ENCODE measurements at regions of chr7 and their contacts with region 1.

Region 1: GRCh38 chr7:143240291-143241168 is 18.7 kb downstream of the TAS2R40 start:
- DNase-seq: peak; percentile 47 to 76
- ATAC-seq: peak; percentile 84 to 96
- H3K4me3 ChIP-seq: no peak overlapping the region
- H3K27ac ChIP-seq: no peak overlapping the region
- H3K4me1 ChIP-seq: peaks cover 9% of the 10 kb centered on the region
- CTCF ChIP-seq: peak; percentile 95
- EP300 ChIP-seq: no peak
- POLR2A ChIP-seq: no peak
- RAD21 ChIP-seq: peak; percentile 89 to 92

Region 2: DNA sequence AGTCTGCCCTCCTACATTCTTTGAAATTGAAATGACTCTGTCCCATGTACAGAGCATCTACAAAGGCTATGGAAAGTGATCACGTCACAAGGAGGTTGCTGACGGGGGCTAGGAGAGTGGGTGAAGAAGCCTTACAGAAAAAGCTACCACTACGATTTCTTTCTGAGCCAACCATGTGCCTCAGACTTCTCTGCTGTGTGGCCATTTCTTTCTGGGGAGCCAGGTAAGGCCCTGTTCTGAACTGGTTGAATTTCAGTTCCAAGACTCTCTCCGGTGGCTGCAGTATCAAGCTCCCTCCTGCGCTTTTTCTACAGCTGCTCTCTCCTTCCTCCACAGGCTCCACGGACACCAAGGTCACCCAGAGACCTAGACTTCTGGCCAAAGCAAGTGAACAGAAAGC is 603.8 kb before region 1 on chr7:
- CTCF ChIA-PET with region 1: no interaction called
- POLR2A ChIA-PET with region 1: no interaction called
- DNase-seq: no peak
- ATAC-seq: no peak; a peak in 1 of 6 replicates
- H3K4me3 ChIP-seq: no peak overlapping the region
- H3K27ac ChIP-seq: no peak overlapping the region
- H3K4me1 ChIP-seq: no peaks in the 10 kb centered on the region
- CTCF ChIP-seq: no peak
- EP300 ChIP-seq: no peak
- POLR2A ChIP-seq: no peak
- RAD21 ChIP-seq: no peak

Region 3: DNA sequence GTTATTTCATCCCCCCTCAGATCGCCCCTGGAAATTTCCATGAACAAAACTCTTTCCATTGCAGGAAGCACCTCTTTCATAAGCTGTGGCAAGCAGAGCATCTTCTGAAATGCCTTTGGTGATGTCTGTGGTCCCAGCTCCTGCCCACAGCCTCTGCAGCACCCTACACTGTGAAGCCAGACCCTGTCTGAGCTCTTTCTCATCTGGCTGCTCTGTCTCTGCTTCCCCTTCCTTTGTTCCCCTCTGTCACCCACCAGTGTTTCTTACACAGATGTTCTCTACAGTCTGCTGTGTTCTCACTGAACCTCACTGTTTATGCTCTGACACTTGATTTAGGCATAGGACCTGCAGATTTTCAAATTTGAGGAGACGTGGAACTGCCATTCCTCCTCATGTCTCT is 59.2 kb before region 1 on chr7:
- CTCF ChIA-PET with region 1: no interaction called
- POLR2A ChIA-PET with region 1: no interaction called
- DNase-seq: no peak
- ATAC-seq: no peak
- H3K4me3 ChIP-seq: no peak overlapping the region
- H3K27ac ChIP-seq: no peak overlapping the region
- H3K4me1 ChIP-seq: no peaks in the 10 kb centered on the region
- CTCF ChIP-seq: no peak
- EP300 ChIP-seq: no peak
- POLR2A ChIP-seq: no peak
- RAD21 ChIP-seq: no peak

Region 4: GRCh38 chr7:143214789-143215679 is 25.5 kb before region 1 on chr7:
- CTCF ChIA-PET with region 1: interaction called, 22 read pairs
- POLR2A ChIA-PET with region 1: no interaction called
- DNase-seq: peak; percentile 82 to 86
- ATAC-seq: peak; percentile 83 to 95
- H3K4me3 ChIP-seq: no peak overlapping the region
- H3K27ac ChIP-seq: no peak overlapping the region
- H3K4me1 ChIP-seq: no peaks in the 10 kb centered on the region
- CTCF ChIP-seq: peak; percentile 100
- EP300 ChIP-seq: no peak
- POLR2A ChIP-seq: no peak
- RAD21 ChIP-seq: peak; percentile 99

Region 5: GRCh38 chr7:143263266-143264195 is 23.0 kb after region 1 on chr7 and contains the start of gene GSTK1:
- CTCF ChIA-PET with region 1: interaction called, 21 read pairs
- POLR2A ChIA-PET with region 1: interaction called, 3 read pairs
- DNase-seq: peak; percentile 64 to 89
- ATAC-seq: peak; percentile 99 to 100
- H3K4me3 ChIP-seq: peak within 1 kb of the TSS; percentile 81
- H3K27ac ChIP-seq: peak within 1 kb of the TSS; percentile 88 to 90
- H3K4me1 ChIP-seq: peaks cover 18% of the 10 kb centered on the region
- CTCF ChIP-seq: no peak
- EP300 ChIP-seq: no peak
- POLR2A ChIP-seq: peak; percentile 98
- RAD21 ChIP-seq: no peak
- polyA plus RNA-seq, gene GSTK1: 76.6 and 96.5 TPM in 2 replicates

Region 6: GRCh38 chr7:143305423-143306070 is 65.0 kb after region 1 on chr7:
- CTCF ChIA-PET with region 1: interaction called, 37 read pairs
- POLR2A ChIA-PET with region 1: interaction called, 10 read pairs
- DNase-seq: peak; percentile 69 to 78
- ATAC-seq: peak; percentile 93 to 98
- H3K4me3 ChIP-seq: no peak overlapping the region
- H3K27ac ChIP-seq: no peak overlapping the region
- H3K4me1 ChIP-seq: no peaks in the 10 kb centered on the region
- CTCF ChIP-seq: peak; percentile 72
- EP300 ChIP-seq: no peak
- POLR2A ChIP-seq: no peak
- RAD21 ChIP-seq: peak; percentile 66 to 72

Region 7: DNA sequence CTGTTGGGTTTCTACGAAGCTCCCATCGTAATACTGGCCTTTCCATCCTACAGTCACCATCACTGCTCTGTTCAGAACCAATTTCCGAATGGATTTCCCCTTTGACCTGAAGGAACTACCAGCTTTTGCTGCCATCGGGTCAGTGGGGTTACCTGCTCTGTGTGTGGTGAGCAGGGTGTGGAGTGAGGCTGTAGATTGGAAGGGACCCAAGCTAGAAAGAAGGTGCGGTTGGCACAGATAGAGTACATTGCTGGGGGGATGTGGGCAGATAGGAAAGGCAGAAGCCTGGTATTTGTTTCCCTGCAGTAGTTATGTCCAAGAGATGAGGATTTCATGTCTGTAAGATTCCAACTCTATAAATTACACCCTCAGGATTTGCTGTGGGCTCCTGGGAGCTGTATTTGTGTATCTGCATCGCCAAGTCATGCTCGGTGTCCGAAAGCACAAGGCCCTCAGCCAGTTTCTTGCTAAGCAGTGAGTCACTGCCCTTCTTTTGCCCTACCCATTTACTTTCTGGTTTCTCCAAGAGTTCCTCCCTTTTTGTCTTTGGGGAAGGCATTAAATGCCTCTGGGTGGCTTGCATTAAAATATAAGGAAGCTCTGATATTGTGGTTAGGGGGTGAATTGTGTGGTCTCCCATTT is 90.8 kb after region 1 on chr7:
- CTCF ChIA-PET with region 1: no interaction called
- POLR2A ChIA-PET with region 1: no interaction called
- DNase-seq: peak; percentile 38 to 72
- ATAC-seq: peak; percentile 83 to 88
- H3K4me3 ChIP-seq: no peak overlapping the region
- H3K27ac ChIP-seq: peak overlapping the region; percentile 41 to 72; a peak in 5 of 6 replicates
- H3K4me1 ChIP-seq: peaks cover 31% of the 10 kb centered on the region
- CTCF ChIP-seq: no peak
- EP300 ChIP-seq: no peak
- POLR2A ChIP-seq: no peak
- RAD21 ChIP-seq: no peak

Region 8: GRCh38 chr7:143490717-143491306 is 250.3 kb after region 1 on chr7:
- CTCF ChIA-PET with region 1: interaction called, 11 read pairs
- POLR2A ChIA-PET with region 1: no interaction called
- DNase-seq: peak in 1 of 2 experiments; percentile 45
- ATAC-seq: peak; percentile 81 to 92; a peak in 5 of 6 replicates
- H3K4me3 ChIP-seq: no peak overlapping the region
- H3K27ac ChIP-seq: no peak overlapping the region
- H3K4me1 ChIP-seq: peaks cover 10% of the 10 kb centered on the region; the same call in 1 of the 3 replicates
- CTCF ChIP-seq: peak; percentile 69
- EP300 ChIP-seq: no peak
- POLR2A ChIP-seq: no peak
- RAD21 ChIP-seq: peak; percentile 76 to 84